Natural killer cell (primary cell): ENCODE measurements at regions of chr11 and their contacts with region 1.

Region 1: DNA sequence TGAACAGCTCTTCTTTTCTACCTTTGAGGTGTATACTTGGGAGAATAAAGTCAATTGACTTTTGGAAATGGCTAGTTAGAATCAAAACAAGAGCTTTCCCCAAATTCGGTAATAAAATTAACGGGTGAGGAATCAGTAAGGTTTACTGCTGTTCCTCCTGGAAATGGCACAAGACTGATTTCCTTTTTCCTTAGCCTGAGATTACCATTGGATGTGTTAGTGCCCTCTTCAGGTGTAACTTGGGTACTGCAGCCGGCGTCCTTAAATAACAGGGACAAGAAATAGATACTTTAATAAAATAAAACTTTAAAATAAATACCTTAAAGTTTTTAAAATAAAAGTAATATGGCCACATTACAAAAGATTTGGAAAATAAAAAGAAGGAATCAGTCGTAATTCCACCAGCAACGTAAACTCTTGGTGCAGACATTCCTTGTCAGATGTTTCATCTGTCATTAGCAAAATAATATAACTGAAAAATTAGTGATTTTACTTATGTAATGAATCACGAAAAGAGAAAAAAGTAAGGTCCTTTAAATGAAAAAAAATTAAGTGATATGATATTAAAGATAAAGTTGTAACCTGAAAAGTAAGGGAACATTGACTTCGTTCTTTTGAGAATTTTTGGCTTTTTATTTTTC is 29.7 kb downstream of the ZFTA start:
- DNase-seq: peak; percentile 49 to 79
- ATAC-seq: peak; percentile 50 to 65 (median 58)
- H3K4me3 ChIP-seq: no peak overlapping the region
- H3K4me3 Mint-ChIP-seq: no peak overlapping the region
- H3K27ac ChIP-seq: no peak overlapping the region
- H3K27ac Mint-ChIP-seq: no peak overlapping the region
- H3K4me1 ChIP-seq: no peaks in the 10 kb centered on the region
- H3K4me1 Mint-ChIP-seq: no peaks in the 10 kb centered on the region
- H3K27me3 ChIP-seq: no peaks in the 10 kb centered on the region
- H3K27me3 Mint-ChIP-seq: no peaks in the 10 kb centered on the region
- CTCF ChIP-seq: peak; percentile 97

Region 2: DNA sequence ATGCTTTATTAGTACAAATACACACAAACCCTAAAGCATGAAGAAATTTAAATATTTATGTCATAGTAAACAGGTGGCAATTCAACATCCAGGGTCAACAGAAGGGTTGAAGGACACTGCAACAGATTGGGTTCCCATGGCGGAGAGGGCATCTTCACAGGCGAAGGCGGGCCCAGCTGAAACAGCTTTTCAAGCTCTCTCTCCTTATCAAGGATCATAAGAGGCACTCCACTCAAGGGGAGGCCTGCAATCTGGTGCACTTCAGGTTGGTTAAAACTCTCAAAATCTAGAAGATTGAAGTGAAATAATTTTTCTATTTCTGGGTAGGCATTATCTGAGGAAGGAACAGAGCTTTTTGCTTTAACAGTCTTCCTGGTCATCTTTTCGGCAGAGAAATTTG is 706.4 kb before region 1 on chr11:
- intact Hi-C with region 1: loop called (anchors 10 kb)
- DNase-seq: no peak
- ATAC-seq: no peak
- H3K4me3 ChIP-seq: no peak overlapping the region
- H3K4me3 Mint-ChIP-seq: no peak overlapping the region
- H3K27ac ChIP-seq: no peak overlapping the region
- H3K27ac Mint-ChIP-seq: no peak overlapping the region
- H3K4me1 ChIP-seq: no peaks in the 10 kb centered on the region
- H3K4me1 Mint-ChIP-seq: peaks cover 0 to 7% of the 10 kb centered on the region in 2 donors
- H3K27me3 ChIP-seq: no peaks in the 10 kb centered on the region
- H3K27me3 Mint-ChIP-seq: peaks cover 16 to 34% of the 10 kb centered on the region in 2 donors
- CTCF ChIP-seq: no peak

Region 3: DNA sequence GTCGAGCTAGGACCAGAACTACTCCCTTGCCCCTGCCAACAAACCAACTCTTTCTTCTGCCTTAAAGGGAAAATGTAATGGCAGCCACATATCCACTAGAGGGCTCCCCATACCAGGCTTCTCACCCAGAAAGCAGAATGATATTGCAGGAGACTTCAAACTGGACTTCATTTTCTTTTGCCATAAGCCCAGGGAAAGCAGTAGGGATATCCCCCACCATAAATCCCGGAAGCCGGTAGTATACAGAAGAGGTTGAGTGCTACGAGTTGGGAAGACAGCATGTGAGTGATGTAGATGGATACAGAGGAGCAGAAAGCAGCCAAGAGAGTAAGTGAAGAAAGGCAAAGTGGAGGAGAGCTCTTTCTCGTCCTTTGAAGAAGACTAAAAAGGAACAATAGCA is 259.9 kb before region 1 on chr11:
- intact Hi-C with region 1: loop called (anchors 2 kb)
- DNase-seq: peak; percentile 36 to 80
- ATAC-seq: peak; percentile 82 to 89 (median 86)
- H3K4me3 ChIP-seq: no peak overlapping the region
- H3K4me3 Mint-ChIP-seq: no peak overlapping the region
- H3K27ac ChIP-seq: no peak overlapping the region
- H3K27ac Mint-ChIP-seq: no peak overlapping the region
- H3K4me1 ChIP-seq: no peaks in the 10 kb centered on the region
- H3K4me1 Mint-ChIP-seq: no peaks in the 10 kb centered on the region
- H3K27me3 ChIP-seq: no peaks in the 10 kb centered on the region
- H3K27me3 Mint-ChIP-seq: peaks cover 7 to 32% of the 10 kb centered on the region in 2 donors
- CTCF ChIP-seq: peak; percentile 97

Region 4: GRCh38 chr11:63682050-63683021 is 56.5 kb before region 1 on chr11:
- intact Hi-C with region 1: no loop called
- DNase-seq: peak in 1 of 2 donors; percentile 67
- ATAC-seq: no peak
- H3K4me3 ChIP-seq: peak overlapping the region; percentile 66
- H3K4me3 Mint-ChIP-seq: peak overlapping the region; percentile 97
- H3K27ac ChIP-seq: peak overlapping the region; percentile 78
- H3K27ac Mint-ChIP-seq: peak overlapping the region; percentile 84 to 86
- H3K4me1 ChIP-seq: peaks cover 14% of the 10 kb centered on the region
- H3K4me1 Mint-ChIP-seq: peaks cover 28 to 30% of the 10 kb centered on the region in 2 donors
- H3K27me3 ChIP-seq: no peaks in the 10 kb centered on the region
- H3K27me3 Mint-ChIP-seq: peaks cover 0 to 3% of the 10 kb centered on the region in 2 donors
- CTCF ChIP-seq: no peak